ENCODE measurements at regions of chr22 and their contacts with region 1.

Region 1: GRCh38 chr22:29883045-29883774 is at the start of gene MTMR3:
- DNase-seq: peak; percentile 66
- H3K4me3 ChIP-seq: peak within 1 kb of the TSS; percentile 95
- H3K27ac ChIP-seq: peak within 1 kb of the TSS; percentile 77
- H3K27me3 ChIP-seq: no peaks in the 10 kb centered on the region
- CTCF ChIP-seq: peak; percentile 31; the same call in 1 of the 2 replicates
- polyA plus RNA-seq, gene MTMR3: 27.8 and 28.8 TPM in 2 replicates

Region 2: DNA sequence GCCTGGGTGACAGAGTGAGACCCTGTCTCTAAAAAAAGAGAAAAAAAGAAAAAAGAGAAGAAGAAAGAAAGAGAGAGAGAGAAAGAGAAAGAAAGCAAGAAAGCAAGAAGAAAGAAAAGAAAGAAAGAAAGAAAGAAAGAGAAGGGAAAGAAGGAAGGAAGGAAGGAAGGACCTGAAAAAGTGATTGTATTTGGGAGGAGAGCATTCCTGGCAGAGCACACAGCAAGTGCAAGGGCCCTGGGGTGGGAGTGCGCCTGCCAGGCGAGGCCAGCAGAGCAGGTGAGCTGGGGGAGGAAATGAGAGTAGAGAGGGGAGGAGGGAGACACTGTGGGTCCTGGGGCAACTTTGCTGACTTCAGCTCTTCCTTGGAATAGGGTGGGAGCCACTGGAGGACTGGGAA is 171.1 kb before region 1 on chr22:
- CTCF ChIA-PET with region 1: no interaction called
- POLR2A ChIA-PET with region 1: interaction called, 11 read pairs
- DNase-seq: no peak
- H3K4me3 ChIP-seq: no peak overlapping the region
- H3K27ac ChIP-seq: no peak overlapping the region
- H3K27me3 ChIP-seq: peaks cover 53% of the 10 kb centered on the region
- CTCF ChIP-seq: no peak

Region 3: GRCh38 chr22:29750559-29751538 is 132.4 kb before region 1 on chr22:
- CTCF ChIA-PET with region 1: no interaction called
- POLR2A ChIA-PET with region 1: no interaction called
- DNase-seq: no peak
- H3K4me3 ChIP-seq: no peak overlapping the region
- H3K27ac ChIP-seq: no peak overlapping the region
- H3K27me3 ChIP-seq: no peaks in the 10 kb centered on the region
- CTCF ChIP-seq: no peak

Region 4: GRCh38 chr22:29780748-29781676 is 102.2 kb before region 1 on chr22:
- CTCF ChIA-PET with region 1: no interaction called
- POLR2A ChIA-PET with region 1: interaction called, 10 read pairs
- DNase-seq: peak; percentile 60
- H3K4me3 ChIP-seq: no peak overlapping the region; the same call in 1 of the 2 replicates
- H3K27ac ChIP-seq: peak overlapping the region; percentile 97
- H3K27me3 ChIP-seq: no peaks in the 10 kb centered on the region
- CTCF ChIP-seq: no peak

Region 5: DNA sequence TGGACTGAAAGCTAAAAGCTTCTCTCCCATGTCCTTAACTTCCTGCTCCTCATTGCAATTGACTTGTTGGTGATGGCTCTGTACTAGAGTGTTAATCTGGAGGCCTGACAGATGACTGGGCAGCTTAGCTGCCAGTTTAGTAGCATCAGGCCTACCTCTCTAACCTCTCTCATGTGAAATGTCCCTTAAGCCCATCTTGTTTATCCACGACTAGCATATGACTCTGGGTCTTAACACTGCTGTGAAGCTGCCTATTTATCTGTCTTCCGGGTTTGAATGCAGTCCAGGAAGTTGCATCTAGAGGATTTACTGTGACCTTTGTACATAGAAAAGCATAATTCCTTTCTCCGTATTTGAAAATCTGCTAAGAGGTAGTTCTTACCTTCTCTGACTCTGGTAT is 111.7 kb after region 1 on chr22:
- CTCF ChIA-PET with region 1: no interaction called
- POLR2A ChIA-PET with region 1: no interaction called
- DNase-seq: no peak
- H3K4me3 ChIP-seq: no peak overlapping the region
- H3K27ac ChIP-seq: peak overlapping the region; percentile 34
- H3K27me3 ChIP-seq: no peaks in the 10 kb centered on the region
- CTCF ChIP-seq: no peak

Measured in AG04450 (cell line).